Cardiac septum (tissue), 1 donor: ENCODE measurements at regions of chr22 and their contacts with region 1.

Region 1: DNA sequence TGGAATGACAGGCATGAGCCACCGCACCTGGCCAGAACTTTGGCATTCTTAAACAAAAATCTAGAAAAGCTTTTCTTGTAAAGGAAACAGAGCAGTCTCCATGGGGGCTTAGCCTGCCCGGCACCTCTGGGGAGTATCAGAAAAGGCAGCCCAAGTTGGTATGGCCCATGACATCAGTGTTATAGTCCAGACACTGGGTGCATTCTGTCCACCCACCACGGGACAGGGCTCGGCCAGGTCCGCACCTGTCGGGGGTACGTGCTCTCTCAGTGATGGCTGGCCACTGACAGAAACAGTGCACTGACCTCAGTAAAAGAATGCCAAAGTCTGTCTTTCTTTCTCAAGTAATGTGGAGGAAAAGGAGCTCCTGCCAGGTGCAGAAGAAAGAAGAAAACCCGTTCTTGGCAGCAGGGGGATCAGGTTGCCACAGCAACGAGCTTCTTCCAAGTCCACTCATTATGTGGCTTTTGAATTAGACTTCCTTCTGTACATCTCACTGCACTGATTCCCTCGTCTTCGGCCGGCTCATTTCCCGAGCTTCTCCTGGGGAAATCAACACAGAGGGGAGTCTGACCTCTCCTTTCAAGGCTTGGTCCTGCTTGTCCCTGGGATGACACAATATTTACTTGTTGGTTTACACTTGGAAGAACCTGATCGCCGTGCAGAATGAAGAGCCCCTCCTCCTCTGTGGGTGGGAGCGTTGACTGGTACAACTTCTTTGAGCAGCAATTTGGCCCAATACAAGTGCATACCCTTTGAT is 35.1 kb downstream of the MCHR1 start:
- DNase-seq: no peak

Region 2: DNA sequence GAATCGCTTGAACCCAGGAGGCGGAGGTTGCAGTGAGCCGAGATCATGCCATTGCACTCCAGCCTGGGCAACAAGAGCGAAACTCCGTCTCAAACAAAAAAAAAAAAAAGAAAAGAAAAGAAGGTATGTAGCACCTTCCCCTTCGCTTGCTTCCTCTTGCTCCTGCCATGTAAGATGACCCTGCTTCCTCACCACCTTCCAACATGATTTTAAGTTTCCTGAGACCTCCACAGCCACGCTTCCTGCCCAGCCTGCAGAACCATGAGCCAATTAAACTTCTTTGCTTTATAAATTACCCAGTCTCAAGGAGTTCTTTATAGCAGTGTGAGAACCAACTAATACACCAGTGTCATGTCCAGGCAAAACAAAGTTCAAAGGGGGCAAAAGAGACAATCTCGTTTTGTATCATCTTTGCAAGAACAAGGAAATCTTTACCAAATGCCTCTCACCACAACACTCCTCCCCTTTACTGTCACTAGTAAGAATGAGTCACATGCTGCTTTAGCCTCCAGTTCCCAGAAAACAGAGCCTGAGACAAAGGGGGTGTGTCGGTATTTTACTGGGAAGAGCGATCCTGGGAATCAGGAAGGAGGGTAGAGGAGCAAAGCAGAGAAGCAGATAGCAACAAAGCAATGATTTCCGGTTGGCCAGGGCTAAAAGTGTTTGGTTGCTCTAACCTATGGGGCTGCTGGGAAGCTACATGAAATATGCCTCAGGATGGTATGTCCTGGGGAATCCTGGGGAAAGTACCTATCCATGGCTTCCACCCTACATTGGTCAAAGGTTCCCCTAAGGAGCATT is 45.6 kb before region 1 on chr22:
- intact Hi-C with region 1: loop called (anchors 5 kb)
- DNase-seq: no peak